ENCODE measurements at regions of chr10 and their contacts with region 1.

Region 1: GRCh38 chr10:24518981-24519597 is 204.6 kb downstream of the ARHGAP21 start:
- DNase-seq: peak; percentile 53
- ATAC-seq: peak; percentile 83
- H3K4me3 ChIP-seq: no peak overlapping the region
- H3K27ac ChIP-seq: peak overlapping the region; percentile 52
- H3K4me1 ChIP-seq: peaks cover 12% of the 10 kb centered on the region
- H3K27me3 ChIP-seq: no peaks in the 10 kb centered on the region
- CTCF ChIP-seq: peak; percentile 74
- EP300 ChIP-seq: no peak
- POLR2A ChIP-seq: no peak
- RAD21 ChIP-seq: 0 out of 2 replicates have a peak, but pooled peaks have one; percentile 51

Region 2: GRCh38 chr10:24156686-24157085 is 362.4 kb before region 1 on chr10:
- CTCF ChIA-PET with region 1: no interaction called
- POLR2A ChIA-PET with region 1: no interaction called
- in situ Hi-C with region 1: no loop called
- intact Hi-C with region 1: no loop called
- DNase-seq: no peak
- ATAC-seq: no peak
- H3K4me3 ChIP-seq: no peak overlapping the region
- H3K27ac ChIP-seq: no peak overlapping the region
- H3K4me1 ChIP-seq: no peaks in the 10 kb centered on the region
- H3K27me3 ChIP-seq: no peaks in the 10 kb centered on the region
- CTCF ChIP-seq: no peak
- EP300 ChIP-seq: no peak
- POLR2A ChIP-seq: no peak
- RAD21 ChIP-seq: no peak

Region 3: DNA sequence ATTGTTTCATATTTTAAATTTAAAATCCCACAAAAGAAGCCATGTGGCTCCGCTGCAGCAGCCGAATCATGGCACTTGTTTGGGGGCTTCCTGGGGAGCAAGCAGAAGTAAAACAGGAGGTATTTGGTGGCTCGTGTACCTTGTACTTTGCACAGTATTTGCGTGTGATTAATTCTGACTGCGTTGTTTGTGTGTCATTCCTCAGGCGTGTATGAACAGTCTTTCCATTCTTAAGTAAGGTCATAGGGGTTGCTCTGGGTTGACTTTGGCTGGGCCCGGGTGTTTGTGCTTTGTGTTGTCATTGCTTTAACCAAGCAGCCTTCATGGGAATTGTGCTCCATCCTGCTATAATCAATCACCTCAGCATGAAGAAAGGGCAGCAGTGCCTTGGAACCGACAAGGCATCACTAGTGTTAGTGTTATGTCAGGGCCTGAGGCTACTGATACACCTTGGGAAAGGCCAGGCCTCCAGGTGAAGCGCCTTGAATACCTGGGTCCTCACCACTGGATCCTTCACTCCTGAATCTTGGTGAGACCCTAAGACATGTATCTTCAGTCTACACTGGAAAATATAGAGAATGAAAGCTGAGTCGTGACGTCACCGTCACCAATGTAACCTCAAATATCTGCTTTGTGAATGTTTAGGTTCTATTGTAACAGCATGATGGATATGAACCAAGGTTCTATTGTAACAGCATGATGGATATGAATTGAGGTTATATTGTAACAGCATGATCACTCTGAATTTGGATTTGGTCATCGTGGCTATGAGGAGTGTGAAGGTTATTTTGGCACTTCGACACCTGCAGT is 22.4 kb after region 1 on chr10:
- CTCF ChIA-PET with region 1: no interaction called
- POLR2A ChIA-PET with region 1: no interaction called
- in situ Hi-C with region 1: no loop called
- intact Hi-C with region 1: loop called (anchors 1 kb)
- DNase-seq: peak; percentile 97
- ATAC-seq: peak; percentile 99
- H3K4me3 ChIP-seq: peak overlapping the region in 1 of 3 experiments; percentile 28; a peak in 1 of 6 replicates
- H3K27ac ChIP-seq: peak overlapping the region; percentile 95
- H3K4me1 ChIP-seq: peaks cover 39% of the 10 kb centered on the region
- H3K27me3 ChIP-seq: no peaks in the 10 kb centered on the region
- CTCF ChIP-seq: no peak
- EP300 ChIP-seq: peak; percentile 92 to 98
- POLR2A ChIP-seq: 0 out of 4 replicates have a peak, but pooled peaks of 1 of the 2 experiments have one; percentile 37
- RAD21 ChIP-seq: 0 out of 2 replicates have a peak, but pooled peaks have one; percentile 9

Region 4: GRCh38 chr10:24848195-24848594 is 329.1 kb after region 1 on chr10:
- CTCF ChIA-PET with region 1: no interaction called
- POLR2A ChIA-PET with region 1: no interaction called
- in situ Hi-C with region 1: no loop called
- intact Hi-C with region 1: no loop called
- DNase-seq: no peak
- ATAC-seq: no peak
- H3K4me3 ChIP-seq: no peak overlapping the region
- H3K27ac ChIP-seq: no peak overlapping the region
- H3K4me1 ChIP-seq: no peaks in the 10 kb centered on the region
- H3K27me3 ChIP-seq: peaks cover 2 to 6% of the 10 kb centered on the region in 2 experiments; a peak in 2 of 5 replicates
- CTCF ChIP-seq: no peak
- EP300 ChIP-seq: no peak
- POLR2A ChIP-seq: no peak
- RAD21 ChIP-seq: no peak

Measured in HepG2 (cell line).